Transverse colon (tissue), 4 donors: ENCODE measurements at regions of chr2 and their contacts with region 1.

Region 1: DNA sequence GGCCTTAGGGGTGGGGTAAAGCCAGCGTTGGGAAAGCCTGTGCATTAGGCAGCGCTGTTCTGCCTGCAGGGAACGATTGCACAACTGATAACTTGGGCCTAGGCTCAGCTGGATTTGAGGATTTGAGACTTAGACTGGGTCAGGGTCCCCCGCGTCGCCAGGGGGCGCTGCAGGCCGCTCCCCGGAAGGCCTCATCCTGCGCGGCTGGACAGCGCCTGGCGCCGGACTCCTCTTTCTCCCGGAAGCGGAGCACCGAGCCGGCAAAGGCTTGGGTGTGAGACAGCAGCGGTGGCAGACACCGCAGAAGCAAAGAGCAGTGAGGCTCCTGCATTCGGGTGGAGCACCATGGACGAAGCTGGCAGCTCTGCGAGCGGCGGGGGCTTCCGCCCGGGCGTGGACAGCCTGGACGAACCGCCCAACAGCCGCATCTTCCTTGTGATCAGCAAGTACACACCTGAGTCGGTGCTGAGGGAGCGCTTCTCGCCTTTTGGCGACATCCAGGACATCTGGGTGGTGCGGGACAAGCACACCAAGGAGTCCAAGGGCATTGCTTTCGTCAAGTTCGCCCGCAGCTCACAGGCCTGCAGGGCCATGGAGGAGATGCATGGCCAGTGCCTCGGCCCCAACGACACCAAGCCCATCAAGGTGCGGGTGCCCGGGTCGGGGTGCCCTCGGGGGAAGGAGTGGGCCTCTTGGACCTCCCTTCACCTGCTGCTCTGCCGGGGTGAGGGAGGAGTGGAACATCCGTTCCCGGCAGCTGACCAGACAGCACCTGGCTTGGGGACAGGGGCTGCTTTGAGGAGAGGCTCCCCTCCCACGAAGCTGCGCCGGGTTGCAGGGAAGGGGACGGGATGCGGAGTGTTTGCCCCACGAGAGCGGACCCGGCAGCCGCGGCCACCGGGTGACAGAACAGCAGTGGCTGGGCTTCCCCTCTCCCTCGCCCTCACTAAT is at the start of gene RBM45:
- DNase-seq: peak; percentile 95
- H3K4me3 ChIP-seq: peak within 1 kb of the TSS; percentile 72 to 84 (median 76)
- H3K27ac ChIP-seq: peak within 1 kb of the TSS; percentile 82 to 92 (median 88)
- H3K4me1 ChIP-seq: peaks cover 0 to 15% (median 8%) of the 10 kb centered on the region in 4 donors
- H3K27me3 ChIP-seq: no peaks in the 10 kb centered on the region
- CTCF ChIP-seq: peak; percentile 88 to 99 (median 97)
- EP300 ChIP-seq: no peak
- POLR2A ChIP-seq: peak; percentile 80
- total RNA-seq, gene RBM45: 6.4 to 20.3 (median 14.9) TPM

Region 2: GRCh38 chr2:177679611-177680605 is 432.6 kb before region 1 on chr2:
- in situ Hi-C with region 1: no loop called
- intact Hi-C with region 1: loop called (anchors 5 kb)
- DNase-seq: peak; percentile 23
- H3K4me3 ChIP-seq: no peak overlapping the region
- H3K27ac ChIP-seq: peak overlapping the region; percentile 1 to 27 (median 10)
- H3K4me1 ChIP-seq: peaks cover 6 to 32% (median 23%) of the 10 kb centered on the region in 4 donors
- H3K27me3 ChIP-seq: no peaks in the 10 kb centered on the region
- CTCF ChIP-seq: no peak
- EP300 ChIP-seq: no peak
- POLR2A ChIP-seq: no peak

Region 3: DNA sequence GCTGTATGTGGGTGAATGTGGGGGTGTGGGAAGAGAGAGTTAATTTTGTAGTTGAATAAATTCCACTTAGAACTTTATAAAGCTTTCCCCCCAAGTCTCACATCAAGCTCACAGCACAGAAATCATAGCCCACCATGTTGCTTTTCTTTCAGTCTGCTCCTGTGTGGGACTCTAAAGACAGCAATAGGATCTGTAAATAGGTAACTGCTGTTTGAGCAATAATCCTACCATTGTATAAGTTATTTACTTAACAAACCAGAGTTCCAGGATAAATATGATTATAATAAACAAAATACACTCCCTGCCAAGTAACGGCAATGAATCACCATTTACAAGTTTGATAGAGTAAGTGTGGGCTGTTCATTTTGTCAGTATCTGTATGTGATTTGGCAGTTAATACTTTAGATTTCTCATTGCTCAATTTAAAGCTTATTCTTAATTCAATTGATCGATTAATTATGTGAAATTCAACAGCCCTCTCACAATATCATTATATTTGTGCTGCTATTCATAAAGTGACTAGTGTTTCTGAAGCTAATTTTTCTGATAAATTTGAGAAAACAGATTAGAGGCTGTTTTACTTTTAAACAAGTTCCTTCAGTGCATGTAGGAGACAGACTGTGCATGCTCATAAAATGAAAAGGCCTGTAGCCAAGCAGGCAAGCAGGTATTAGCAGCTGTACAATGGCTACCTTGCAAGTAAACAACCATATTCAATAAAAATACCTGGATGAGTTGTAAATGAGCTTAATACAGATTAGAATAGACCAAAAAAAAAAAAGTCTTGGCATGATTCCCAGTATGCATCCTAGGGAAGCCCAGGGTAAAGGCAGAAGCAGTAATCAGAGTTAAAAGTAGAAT is 182.6 kb before region 1 on chr2:
- in situ Hi-C with region 1: no loop called
- intact Hi-C with region 1: no loop called
- DNase-seq: no peak
- H3K4me3 ChIP-seq: no peak overlapping the region
- H3K27ac ChIP-seq: no peak overlapping the region
- H3K4me1 ChIP-seq: no peaks in the 10 kb centered on the region
- H3K27me3 ChIP-seq: no peaks in the 10 kb centered on the region
- CTCF ChIP-seq: no peak
- EP300 ChIP-seq: no peak
- POLR2A ChIP-seq: no peak

Region 4: DNA sequence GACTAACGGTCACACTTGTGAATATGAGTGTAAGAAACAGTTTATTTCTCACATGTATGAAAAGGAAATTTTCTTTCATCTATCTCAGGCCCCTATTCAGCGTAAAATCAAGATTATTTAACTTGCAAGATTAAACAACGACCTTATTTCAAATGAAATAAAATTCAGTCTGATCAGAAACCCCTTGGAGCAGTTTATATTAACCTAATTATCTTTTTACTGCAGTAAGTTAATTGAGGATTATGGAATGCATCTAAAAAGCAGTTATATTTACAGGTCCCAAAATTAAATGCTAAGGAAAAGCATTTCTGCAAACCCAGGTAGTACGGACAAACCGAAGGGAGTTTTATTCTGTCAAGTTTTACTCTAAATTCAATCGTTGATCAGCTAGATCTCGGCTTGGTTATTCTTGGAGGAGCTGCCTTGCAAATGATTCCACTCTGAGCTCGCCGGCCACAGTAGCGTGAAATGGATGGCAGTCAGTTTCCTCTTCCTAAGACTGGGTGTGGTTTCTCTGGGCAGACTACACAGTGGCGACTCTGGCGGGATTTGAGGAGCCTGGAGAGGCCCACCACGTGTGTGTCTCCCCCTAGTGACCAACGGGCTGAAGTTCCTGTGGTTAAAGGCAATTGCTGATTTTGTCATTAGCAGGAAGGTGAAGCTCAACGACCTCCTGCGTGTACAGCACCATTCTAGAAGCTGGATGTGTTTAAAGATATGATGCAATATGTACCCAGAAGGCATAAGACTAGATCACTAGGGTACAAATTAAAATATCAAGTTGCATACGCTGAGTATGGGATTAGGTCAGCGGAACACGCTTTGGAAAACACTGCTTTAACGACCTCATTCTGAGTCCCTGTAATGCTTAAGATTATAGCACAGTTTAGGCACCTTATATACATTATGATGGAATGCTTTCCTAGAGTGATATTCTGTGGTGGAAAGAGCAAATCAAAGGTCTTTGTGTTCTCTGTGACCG is 302.1 kb after region 1 on chr2:
- in situ Hi-C with region 1: loop called in 2 of 4 experiments (anchors 25 kb)
- intact Hi-C with region 1: no loop called
- DNase-seq: peak; percentile 90
- H3K4me3 ChIP-seq: peak overlapping the region in 3 of 4 donors; percentile 56 to 78 (median 66)
- H3K27ac ChIP-seq: peak overlapping the region; percentile 85 to 94 (median 92)
- H3K4me1 ChIP-seq: peaks cover 4 to 33% (median 7%) of the 10 kb centered on the region in 4 donors
- H3K27me3 ChIP-seq: no peaks in the 10 kb centered on the region
- CTCF ChIP-seq: peak; percentile 77 to 87 (median 83)
- EP300 ChIP-seq: no peak
- POLR2A ChIP-seq: no peak